ENCODE measurements at regions of chr20 and their contacts with region 1.

Region 1: DNA sequence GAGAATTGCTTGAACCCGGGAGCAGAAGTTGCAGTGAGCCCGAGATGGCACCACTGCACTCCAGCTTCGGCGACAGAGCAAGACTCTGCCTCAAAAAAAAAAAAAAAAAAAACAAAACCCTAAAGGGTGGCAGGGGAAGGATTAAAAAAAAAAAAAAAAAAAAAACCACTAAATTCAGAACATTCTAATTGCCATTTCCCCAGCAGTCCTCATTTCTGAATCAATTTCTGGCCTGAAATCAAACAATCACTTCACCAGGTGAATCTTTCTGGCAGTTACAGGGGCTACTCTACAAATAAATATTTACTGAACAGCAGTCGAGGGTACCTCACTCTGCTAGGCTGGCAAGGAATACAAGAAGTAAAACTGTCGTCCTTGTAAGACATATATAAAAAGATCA is 1.2 kb downstream of the UQCC1 start:
- DNase-seq: no peak
- ATAC-seq: no peak
- H3K4me3 ChIP-seq: no peak overlapping the region
- H3K4me3 Mint-ChIP-seq: peak overlapping the region; percentile 96
- H3K27ac ChIP-seq: no peak overlapping the region
- H3K27ac Mint-ChIP-seq: peak overlapping the region; percentile 90
- H3K4me1 ChIP-seq: peaks cover 17% of the 10 kb centered on the region
- H3K4me1 Mint-ChIP-seq: peaks cover 23% of the 10 kb centered on the region
- H3K27me3 ChIP-seq: no peaks in the 10 kb centered on the region
- H3K27me3 Mint-ChIP-seq: no peaks in the 10 kb centered on the region
- CTCF ChIP-seq: no peak

Region 2: GRCh38 chr20:35171753-35172433 is 238.7 kb before region 1 on chr20 and contains the start of gene PROCR:
- CTCF ChIA-PET with region 1: no interaction called
- POLR2A ChIA-PET with region 1: no interaction called
- intact Hi-C with region 1: no loop called
- DNase-seq: peak in 5 of 14 experiments; percentile 1 to 45 (median 18)
- ATAC-seq: peak; percentile 37
- H3K4me3 ChIP-seq: peak within 1 kb of the TSS; percentile 36
- H3K4me3 Mint-ChIP-seq: peak within 1 kb of the TSS; percentile 43
- H3K27ac ChIP-seq: no peak within 1 kb of the TSS
- H3K27ac Mint-ChIP-seq: no peak within 1 kb of the TSS
- H3K4me1 ChIP-seq: peaks cover 12% of the 10 kb centered on the region
- H3K4me1 Mint-ChIP-seq: peaks cover 17% of the 10 kb centered on the region
- H3K27me3 ChIP-seq: no peaks in the 10 kb centered on the region
- H3K27me3 Mint-ChIP-seq: no peaks in the 10 kb centered on the region
- CTCF ChIP-seq: no peak
- total RNA-seq, gene PROCR: 0.33 to 0.61 TPM

Region 3: DNA sequence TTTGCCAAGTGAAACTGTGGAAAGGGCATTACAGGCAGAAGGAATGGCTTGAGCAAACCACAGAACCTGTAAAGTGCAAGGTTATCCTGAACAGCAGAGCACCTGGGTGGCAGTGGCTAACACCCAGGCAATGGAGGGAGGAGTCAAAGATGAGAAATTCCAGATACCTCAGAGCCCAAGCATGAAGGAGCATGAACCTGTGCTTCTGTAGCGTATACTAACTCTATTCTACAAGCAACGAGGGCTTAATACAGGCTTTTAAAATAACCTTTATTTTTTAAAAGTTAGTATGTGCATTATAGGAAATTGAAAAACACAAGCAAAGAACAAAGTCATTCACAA is 634.7 kb after region 1 on chr20:
- CTCF ChIA-PET with region 1: no interaction called
- POLR2A ChIA-PET with region 1: no interaction called
- intact Hi-C with region 1: loop called in 1 of 2 experiments (anchors 5 kb)
- DNase-seq: no peak
- ATAC-seq: no peak
- H3K4me3 ChIP-seq: no peak overlapping the region
- H3K4me3 Mint-ChIP-seq: no peak overlapping the region
- H3K27ac ChIP-seq: no peak overlapping the region
- H3K27ac Mint-ChIP-seq: no peak overlapping the region
- H3K4me1 ChIP-seq: no peaks in the 10 kb centered on the region
- H3K4me1 Mint-ChIP-seq: peaks cover 47% of the 10 kb centered on the region
- H3K27me3 ChIP-seq: no peaks in the 10 kb centered on the region
- H3K27me3 Mint-ChIP-seq: no peaks in the 10 kb centered on the region
- CTCF ChIP-seq: no peak

Region 4: GRCh38 chr20:36235892-36236785 is 825.5 kb after region 1 on chr20 and contains the start of gene AAR2:
- CTCF ChIA-PET with region 1: no interaction called
- POLR2A ChIA-PET with region 1: no interaction called
- intact Hi-C with region 1: loop called in 1 of 2 experiments (anchors 5 kb)
- DNase-seq: peak; percentile 65 to 85 (median 75)
- ATAC-seq: peak; percentile 96
- H3K4me3 ChIP-seq: peak within 1 kb of the TSS; percentile 98
- H3K4me3 Mint-ChIP-seq: peak within 1 kb of the TSS; percentile 95
- H3K27ac ChIP-seq: peak within 1 kb of the TSS; percentile 42 to 76
- H3K27ac Mint-ChIP-seq: peak within 1 kb of the TSS; percentile 83
- H3K4me1 ChIP-seq: peaks cover 36% of the 10 kb centered on the region
- H3K4me1 Mint-ChIP-seq: peaks cover 42% of the 10 kb centered on the region
- H3K27me3 ChIP-seq: no peaks in the 10 kb centered on the region
- H3K27me3 Mint-ChIP-seq: no peaks in the 10 kb centered on the region
- CTCF ChIP-seq: no peak
- total RNA-seq, gene AAR2: 22.5 to 24.3 TPM